ENCODE measurements at regions of chr18 and their contacts with region 1.

Region 1: DNA sequence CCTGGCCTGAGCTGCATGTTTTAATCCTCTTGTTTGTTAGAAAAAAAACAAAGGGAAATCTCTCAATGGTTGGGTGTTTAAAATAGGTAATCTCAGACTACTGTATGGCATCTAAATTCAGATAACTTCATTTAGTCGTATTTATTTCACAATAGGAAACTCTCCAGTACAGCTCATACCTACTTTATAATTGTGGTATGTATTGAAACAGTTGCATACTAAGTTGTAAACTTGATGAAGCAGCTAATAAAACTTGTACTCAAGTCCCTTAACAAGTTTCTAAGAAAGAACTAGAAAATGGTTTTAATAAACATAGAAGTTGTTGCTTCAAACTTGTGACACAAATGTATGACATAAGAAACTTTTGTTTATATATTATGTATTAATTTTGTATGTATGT is 334.5 kb downstream of the PTPRM start:
- DNase-seq: no peak
- H3K4me3 ChIP-seq: no peak overlapping the region
- H3K27ac ChIP-seq: no peak overlapping the region
- H3K4me1 ChIP-seq: peaks cover 24% of the 10 kb centered on the region
- H3K27me3 ChIP-seq: no peaks in the 10 kb centered on the region
- CTCF ChIP-seq: no peak

Region 2: GRCh38 chr18:7812431-7813063 is 89.1 kb before region 1 on chr18:
- CTCF ChIA-PET with region 1: no interaction called
- POLR2A ChIA-PET with region 1: interaction called, 11 read pairs
- intact Hi-C with region 1: no loop called
- DNase-seq: peak; percentile 33 to 82
- H3K4me3 ChIP-seq: no peak overlapping the region
- H3K27ac ChIP-seq: peak overlapping the region; percentile 43
- H3K4me1 ChIP-seq: peaks cover 17% of the 10 kb centered on the region
- H3K27me3 ChIP-seq: no peaks in the 10 kb centered on the region
- CTCF ChIP-seq: no peak

Region 3: DNA sequence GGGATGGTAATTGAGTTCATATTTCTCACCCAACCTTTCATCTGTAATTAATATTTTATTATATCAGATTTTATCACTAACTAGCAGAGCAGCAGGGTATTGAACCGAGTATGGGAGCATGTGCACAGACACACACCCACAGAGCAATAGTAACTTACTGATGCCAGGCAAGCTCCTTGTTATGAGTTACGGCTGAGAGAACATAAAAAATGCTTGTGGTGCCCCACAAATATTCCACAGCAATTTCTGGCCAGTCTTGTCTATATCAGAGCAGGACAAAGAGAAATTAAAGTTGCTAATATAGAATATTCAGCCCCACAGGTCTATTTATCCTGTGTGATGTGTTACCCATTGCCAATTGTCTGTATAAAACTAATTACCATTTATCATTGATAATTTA is 205.8 kb after region 1 on chr18:
- CTCF ChIA-PET with region 1: no interaction called
- POLR2A ChIA-PET with region 1: no interaction called
- intact Hi-C with region 1: no loop called
- DNase-seq: no peak
- H3K4me3 ChIP-seq: no peak overlapping the region
- H3K27ac ChIP-seq: no peak overlapping the region
- H3K4me1 ChIP-seq: no peaks in the 10 kb centered on the region
- H3K27me3 ChIP-seq: no peaks in the 10 kb centered on the region
- CTCF ChIP-seq: no peak

Measured in PC-9 (cell line).